Psoas muscle (tissue), 8 donors: ENCODE measurements at regions of chr9 and their contacts with region 1.

Region 1: DNA sequence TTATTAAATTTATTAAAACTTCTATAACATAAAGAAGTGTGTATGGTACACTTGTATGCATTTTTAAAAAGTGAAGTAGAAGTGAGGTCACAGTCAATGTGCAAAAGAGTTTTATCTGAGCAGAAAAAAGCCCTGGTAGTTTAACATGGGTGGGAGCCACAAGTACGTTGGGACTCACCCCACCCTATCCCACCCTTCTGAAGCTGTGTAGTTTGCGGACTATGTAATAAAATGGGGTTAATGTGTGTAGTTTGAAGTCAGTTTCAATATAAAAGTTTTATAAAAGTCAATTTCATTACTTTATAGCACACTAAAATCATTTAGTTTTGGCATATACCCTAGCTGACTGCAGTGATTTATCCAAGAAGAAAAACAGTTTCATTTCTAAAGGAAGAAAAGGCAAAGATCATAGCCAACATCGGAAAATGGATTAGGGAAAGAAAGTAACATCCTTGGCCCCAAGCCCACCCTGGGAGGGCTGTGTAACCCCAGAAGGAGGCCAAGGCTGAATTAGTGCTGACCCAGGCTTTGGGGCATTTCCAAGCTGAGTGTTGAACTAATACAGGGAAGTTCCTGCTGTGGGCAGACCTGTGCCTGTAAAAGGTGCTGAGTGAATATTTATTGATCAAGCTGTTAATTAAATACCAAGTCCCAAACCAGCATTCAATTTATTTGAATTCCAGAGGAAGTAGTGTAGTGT is 398.6 kb upstream of the ADAMTSL1 start:
- DNase-seq: no peak
- ATAC-seq: no peak
- H3K4me3 ChIP-seq: no peak overlapping the region
- H3K27ac ChIP-seq: no peak overlapping the region
- H3K4me1 ChIP-seq: no peaks in the 10 kb centered on the region
- H3K27me3 ChIP-seq: no peaks in the 10 kb centered on the region
- CTCF ChIP-seq: no peak

Region 2: GRCh38 chr9:17706347-17706746 is 369.1 kb before region 1 on chr9:
- intact Hi-C with region 1: no loop called
- DNase-seq: no peak
- ATAC-seq: no peak
- H3K4me3 ChIP-seq: no peak overlapping the region
- H3K27ac ChIP-seq: no peak overlapping the region
- H3K4me1 ChIP-seq: no peaks in the 10 kb centered on the region
- H3K27me3 ChIP-seq: no peaks in the 10 kb centered on the region
- CTCF ChIP-seq: no peak

Region 3: DNA sequence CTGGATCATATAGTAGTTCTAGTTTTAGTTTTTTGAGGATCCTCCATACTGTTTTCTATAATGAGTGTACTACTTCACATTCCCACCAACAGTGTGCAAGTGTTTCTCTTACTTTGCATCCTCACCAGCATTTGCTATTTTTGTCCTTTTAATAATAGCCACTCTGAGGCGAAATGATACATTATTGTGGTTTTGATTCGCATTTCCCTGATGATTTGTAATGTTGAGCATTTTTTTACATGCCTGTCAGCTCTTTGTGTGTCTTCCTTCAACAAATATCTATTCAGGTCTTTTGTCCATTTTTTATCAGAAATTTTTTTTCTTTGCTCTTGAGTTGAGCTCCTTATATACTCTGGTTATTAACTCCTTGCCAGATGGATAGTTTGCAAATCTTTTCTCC is 512.6 kb after region 1 on chr9:
- intact Hi-C with region 1: no loop called
- DNase-seq: no peak
- ATAC-seq: no peak
- H3K4me3 ChIP-seq: no peak overlapping the region
- H3K27ac ChIP-seq: no peak overlapping the region
- H3K4me1 ChIP-seq: no peaks in the 10 kb centered on the region
- H3K27me3 ChIP-seq: no peaks in the 10 kb centered on the region
- CTCF ChIP-seq: no peak

Region 4: DNA sequence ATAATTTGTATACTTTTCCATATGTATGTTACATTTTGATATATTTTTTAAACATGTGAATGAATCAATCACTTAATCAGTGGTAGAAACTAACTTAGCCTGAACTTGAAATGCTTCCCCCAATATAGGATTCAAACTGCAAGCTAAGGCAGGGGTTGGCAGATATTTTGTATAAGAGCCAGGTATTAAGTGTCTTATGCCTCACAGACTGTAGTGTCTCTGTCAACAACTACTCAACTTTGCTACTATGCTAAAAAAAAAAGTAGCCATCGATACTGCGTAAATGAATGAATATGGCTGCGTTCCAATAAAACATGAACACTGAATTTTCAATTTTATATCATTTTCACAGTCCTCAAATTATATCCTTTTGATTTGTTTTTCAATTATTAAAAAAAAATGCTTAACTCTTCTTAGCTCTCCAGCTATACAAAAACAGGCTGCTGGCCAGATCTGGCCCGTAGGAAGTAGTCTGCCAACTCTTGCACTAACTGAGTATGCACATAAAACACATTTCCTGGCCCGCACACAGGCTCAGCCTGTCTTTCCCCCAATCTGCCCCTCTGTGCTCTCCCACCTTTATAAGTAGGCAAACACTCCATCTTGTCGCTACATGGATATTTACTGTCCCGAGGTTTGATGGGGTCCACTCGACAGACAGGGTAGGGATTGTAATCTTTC is 865.8 kb after region 1 on chr9:
- intact Hi-C with region 1: loop called in 1 of 2 experiments (anchors 5 kb)
- DNase-seq: no peak
- ATAC-seq: no peak
- H3K4me3 ChIP-seq: no peak overlapping the region
- H3K27ac ChIP-seq: no peak overlapping the region
- H3K4me1 ChIP-seq: no peaks in the 10 kb centered on the region
- H3K27me3 ChIP-seq: peaks cover 0 to 1% (median 0%) of the 10 kb centered on the region in 3 donors
- CTCF ChIP-seq: no peak